Kidney (tissue), 22 donors: ENCODE measurements at regions of chr4 and their contacts with region 1.

Region 1: GRCh38 chr4:80989921-80990544 is 40.5 kb upstream of the BMP3 start:
- DNase-seq: peak in 3 of 5 donors; percentile 18 to 85 (median 82)
- H3K4me3 ChIP-seq: no peak overlapping the region
- H3K27ac ChIP-seq: no peak overlapping the region
- H3K4me1 ChIP-seq: no peaks in the 10 kb centered on the region
- H3K27me3 ChIP-seq: no peaks in the 10 kb centered on the region
- CTCF ChIP-seq: peak; percentile 69

Region 2: GRCh38 chr4:80362578-80363181 is 627.4 kb before region 1 on chr4:
- intact Hi-C with region 1: loop called (anchors 5 kb)
- DNase-seq: peak in 4 of 5 donors; percentile 52 to 72 (median 69)
- H3K4me3 ChIP-seq: no peak overlapping the region
- H3K27ac ChIP-seq: no peak overlapping the region
- H3K4me1 ChIP-seq: no peaks in the 10 kb centered on the region
- H3K27me3 ChIP-seq: peaks cover 2% of the 10 kb centered on the region
- CTCF ChIP-seq: peak; percentile 40

Region 3: GRCh38 chr4:81549984-81550383 is 560.0 kb after region 1 on chr4:
- intact Hi-C with region 1: no loop called
- DNase-seq: peak in 1 of 5 donors; percentile 48
- H3K4me3 ChIP-seq: no peak overlapping the region
- H3K27ac ChIP-seq: peak overlapping the region in 1 of 2 donors; percentile 23
- H3K4me1 ChIP-seq: peaks cover 0 to 23% (median 11%) of the 10 kb centered on the region in 3 donors
- H3K27me3 ChIP-seq: no peaks in the 10 kb centered on the region
- CTCF ChIP-seq: no peak